ENCODE measurements at regions of chr2 and their contacts with region 1.

Region 1: DNA sequence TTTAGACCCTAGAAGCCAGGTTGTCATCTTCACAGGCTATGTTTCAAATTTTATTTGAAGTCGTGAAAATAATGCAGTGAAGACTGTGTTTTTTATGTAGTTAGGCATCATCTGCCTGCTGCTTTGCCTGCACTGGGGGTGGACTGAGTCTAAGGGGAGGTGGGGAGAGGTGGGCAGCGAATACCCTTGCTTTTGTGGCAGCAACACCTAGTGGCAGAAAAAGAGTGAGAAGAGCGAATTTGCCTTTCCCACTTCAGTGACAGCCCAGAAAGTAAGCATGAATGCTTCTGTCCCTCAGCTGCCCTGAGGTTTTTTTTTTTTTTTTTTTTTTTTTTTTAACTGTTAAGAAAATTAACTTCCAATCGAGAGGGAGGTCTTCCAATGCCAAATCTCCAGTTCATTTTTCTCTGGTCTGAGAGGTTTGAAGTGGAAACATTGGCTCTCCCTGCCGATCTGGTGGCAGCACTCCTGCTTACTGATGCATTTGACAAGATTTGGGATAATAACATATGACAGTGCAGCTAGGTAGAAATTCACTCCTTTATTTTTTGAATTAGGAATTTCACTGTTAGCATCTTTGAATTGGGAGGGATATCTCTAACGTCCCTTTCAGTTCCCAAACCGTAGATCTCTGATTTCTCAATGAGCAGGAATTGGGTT is 60.3 kb upstream of the LYPD6B start:
- DNase-seq: no peak
- H3K4me3 ChIP-seq: no peak overlapping the region
- H3K4me1 ChIP-seq: peaks cover 17% of the 10 kb centered on the region
- H3K27me3 ChIP-seq: no peaks in the 10 kb centered on the region

Region 2: DNA sequence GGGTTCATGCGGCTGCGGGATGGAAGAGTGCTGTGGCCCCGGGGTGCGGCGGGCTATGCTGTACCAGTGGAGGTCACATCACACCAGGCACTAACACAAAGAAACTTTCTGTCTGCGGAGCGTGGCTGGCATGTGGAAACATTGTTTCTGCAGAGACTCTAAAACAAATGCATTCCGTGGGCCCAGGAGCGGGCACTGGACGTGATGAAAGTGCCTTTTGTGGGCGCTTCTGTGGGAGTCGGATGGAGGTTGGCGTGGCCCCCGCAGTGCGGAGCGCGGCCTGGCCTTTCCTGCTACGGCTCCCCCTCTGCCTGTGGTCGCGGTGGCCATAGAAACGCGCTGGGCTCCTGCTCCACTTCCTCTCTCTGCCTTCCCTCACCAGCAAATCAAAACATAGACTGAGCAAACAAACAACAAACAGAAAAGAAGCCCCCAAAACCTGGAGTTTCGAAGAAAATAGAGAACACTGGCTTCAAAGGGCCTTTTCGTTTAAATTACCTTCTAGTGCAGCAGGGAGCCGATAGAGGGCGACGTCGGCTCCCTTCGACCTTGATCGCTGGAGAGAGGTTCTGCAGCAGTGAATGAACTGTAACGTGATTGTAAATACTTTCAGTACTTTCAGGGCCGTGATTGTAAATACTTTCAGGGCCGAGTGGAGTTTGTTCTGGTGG is 51.7 kb before region 1 on chr2:
- in situ Hi-C with region 1: no loop called
- DNase-seq: peak; percentile 70
- H3K4me3 ChIP-seq: no peak overlapping the region
- H3K4me1 ChIP-seq: peaks cover 20% of the 10 kb centered on the region
- H3K27me3 ChIP-seq: no peaks in the 10 kb centered on the region

Region 3: DNA sequence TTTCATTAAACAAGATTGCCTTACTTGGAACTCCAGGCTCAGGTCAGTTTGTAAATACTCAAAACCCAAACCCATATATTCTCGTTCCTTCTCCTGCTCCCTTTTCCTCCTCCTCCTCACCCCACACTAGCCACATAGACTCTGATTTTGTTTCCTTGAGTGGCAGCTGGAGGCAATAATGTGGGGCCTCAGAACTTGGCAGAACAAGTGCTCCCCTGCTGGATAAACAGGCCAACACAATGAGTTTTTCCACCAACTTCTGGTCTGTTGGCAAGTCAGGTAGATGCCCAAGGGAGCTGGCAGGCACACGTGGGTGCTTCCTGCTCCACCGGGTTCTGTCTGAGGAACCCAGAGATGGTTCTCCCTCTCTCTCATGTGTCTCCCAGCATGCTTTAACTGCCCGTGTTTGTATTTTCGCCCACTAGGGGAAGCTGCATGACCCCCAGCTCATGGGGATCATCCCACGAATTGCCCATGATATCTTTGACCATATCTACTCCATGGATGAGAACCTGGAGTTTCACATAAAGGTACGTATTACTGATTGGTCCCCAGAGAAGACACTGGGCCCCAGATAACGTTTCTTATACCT is 41.2 kb before region 1 on chr2:
- in situ Hi-C with region 1: loop called (anchors 5 kb)
- DNase-seq: no peak
- H3K4me3 ChIP-seq: no peak overlapping the region
- H3K4me1 ChIP-seq: peaks cover 10% of the 10 kb centered on the region
- H3K27me3 ChIP-seq: peaks cover 10% of the 10 kb centered on the region

Region 4: DNA sequence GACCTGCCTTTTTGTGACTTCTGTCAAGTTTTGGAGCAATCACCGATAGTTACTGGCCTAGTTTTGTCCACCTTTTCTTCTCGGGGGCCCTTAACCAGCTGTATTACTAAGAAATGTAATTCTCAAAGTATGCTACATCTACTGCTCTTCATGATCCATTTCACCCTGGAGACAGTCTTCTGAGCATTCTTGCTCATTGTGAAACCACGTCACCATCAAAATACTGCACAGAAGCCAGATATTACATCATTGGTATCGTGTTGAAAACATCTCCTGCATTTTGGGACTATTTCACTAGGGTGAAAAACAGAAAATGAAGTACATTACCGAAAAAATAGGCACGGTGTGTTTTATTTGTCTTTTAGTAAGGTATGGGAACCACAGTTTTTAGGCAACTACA is 72.0 kb after region 1 on chr2:
- in situ Hi-C with region 1: no loop called
- DNase-seq: no peak
- H3K4me3 ChIP-seq: no peak overlapping the region
- H3K4me1 ChIP-seq: no peaks in the 10 kb centered on the region
- H3K27me3 ChIP-seq: no peaks in the 10 kb centered on the region; the same call in 1 of the 2 replicates